AG04449 (cell line): ENCODE measurements at regions of chr9 and their contacts with region 1.

Region 1: GRCh38 chr9:133042676-133043075 is 11.9 kb downstream of the GTF3C5 start:
- DNase-seq: no peak
- H3K4me3 ChIP-seq: no peak overlapping the region
- CTCF ChIP-seq: no peak

Region 2: DNA sequence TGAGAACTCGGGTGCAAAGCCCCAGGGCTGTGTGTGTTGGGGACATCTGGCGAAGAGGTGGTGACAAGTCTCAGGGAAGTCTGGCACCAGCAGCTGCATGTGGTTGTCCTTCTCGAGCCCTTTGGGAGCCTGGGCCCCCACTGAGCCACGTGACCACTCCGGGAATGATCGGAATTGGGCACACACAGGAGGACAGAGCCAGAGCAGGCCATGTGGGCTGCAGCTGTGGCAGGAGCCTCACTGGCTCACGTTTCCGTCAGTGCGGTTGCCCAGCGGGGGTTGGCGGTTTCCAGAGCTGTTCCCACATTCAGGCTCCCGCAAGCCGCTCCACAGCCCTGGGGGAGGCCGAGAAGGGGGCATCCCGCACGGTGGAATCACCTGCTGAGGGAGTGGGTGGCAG is 12.3 kb after region 1 on chr9:
- CTCF ChIA-PET with region 1: interaction called, 17 read pairs
- POLR2A ChIA-PET with region 1: no interaction called
- DNase-seq: peak; percentile 69
- H3K4me3 ChIP-seq: no peak overlapping the region
- CTCF ChIP-seq: no peak

Region 3: GRCh38 chr9:133121198-133121939 is 78.7 kb after region 1 on chr9 and contains the start of gene RALGDS:
- CTCF ChIA-PET with region 1: interaction called, 10 read pairs
- POLR2A ChIA-PET with region 1: no interaction called
- DNase-seq: no peak
- H3K4me3 ChIP-seq: peak within 1 kb of the TSS; percentile 67
- CTCF ChIP-seq: no peak